ENCODE measurements at regions of chr9 and their contacts with region 1.

Region 1: DNA sequence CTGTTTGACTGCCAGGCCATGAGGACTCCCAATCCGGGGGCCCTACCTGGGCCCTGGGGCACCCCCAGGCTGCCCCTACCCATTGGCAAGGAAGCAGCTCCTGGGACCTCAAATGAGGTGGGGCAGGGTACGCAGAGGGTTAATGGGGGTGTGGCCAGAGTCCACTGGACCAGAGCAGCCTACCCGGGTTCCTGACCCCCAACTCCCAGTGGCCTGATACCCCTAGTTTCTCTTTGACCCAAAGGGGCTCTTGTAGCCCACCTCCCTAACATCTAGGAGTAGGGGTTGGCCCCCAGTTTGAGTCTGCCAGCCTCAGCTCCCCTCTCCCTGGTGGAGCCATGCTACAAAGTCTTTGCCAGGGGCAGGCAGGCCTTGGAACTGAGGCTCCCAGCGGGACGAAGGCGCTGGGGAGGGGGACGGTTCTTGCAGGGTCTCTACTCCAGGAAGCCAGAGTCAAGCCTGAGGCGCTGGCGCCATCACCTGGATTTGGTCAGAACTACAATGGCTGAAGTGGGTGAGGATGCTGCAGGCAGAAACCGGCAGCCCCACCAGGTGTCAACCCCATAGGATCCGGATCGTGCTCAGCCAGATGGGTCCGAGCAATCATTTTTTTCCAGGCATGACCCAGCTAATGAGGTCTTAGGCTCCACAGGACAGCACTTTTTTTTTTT is 8.4 kb upstream of the CERCAM start:
- DNase-seq: no peak
- H3K4me3 ChIP-seq: no peak overlapping the region
- H3K27ac ChIP-seq: no peak overlapping the region
- H3K4me1 ChIP-seq: peaks cover 0 to 6% (median 0%) of the 10 kb centered on the region in 6 donors
- H3K27me3 ChIP-seq: peaks cover 0 to 98% (median 16%) of the 10 kb centered on the region in 7 donors
- CTCF ChIP-seq: peak in 9 of 11 experiments; percentile 37 to 80 (median 60)
- POLR2A ChIP-seq: no peak

Region 2: DNA sequence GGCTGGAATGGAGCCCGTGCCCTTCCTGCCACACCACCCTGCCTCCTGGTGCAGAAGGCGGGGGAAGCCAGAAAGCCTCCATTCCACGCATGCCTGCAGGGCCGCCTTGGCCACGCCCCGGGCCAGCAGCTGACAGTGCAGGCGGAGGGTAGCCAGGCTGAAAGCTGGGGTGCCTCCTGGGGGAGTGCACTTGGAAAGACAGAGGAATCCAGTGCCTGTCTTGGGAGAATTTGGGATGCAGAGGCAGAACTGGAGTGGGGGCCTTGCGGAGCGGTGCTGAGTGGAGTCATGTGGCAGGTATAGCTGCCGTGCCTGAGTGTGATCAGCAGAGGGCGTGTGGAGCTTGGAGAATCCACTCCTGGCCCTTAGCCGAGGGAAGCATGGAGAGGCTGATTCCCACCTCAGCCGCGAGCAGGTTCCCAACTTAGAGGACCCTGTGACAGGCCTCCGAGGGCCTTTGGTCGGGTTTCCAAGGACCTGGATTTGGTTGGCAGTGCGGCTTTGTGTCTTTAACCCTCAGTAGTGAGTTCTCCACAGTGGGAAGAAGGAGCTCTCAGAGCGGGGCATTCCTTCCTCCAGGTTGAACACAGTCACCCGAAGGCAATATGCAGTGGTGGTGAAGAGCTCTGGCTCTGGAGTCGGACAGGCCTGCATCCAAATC is 50.1 kb before region 1 on chr9:
- intact Hi-C with region 1: loop called (anchors 2 kb)
- DNase-seq: peak; percentile 90
- H3K4me3 ChIP-seq: peak overlapping the region; percentile 21 to 67 (median 46)
- H3K27ac ChIP-seq: peak overlapping the region in 7 of 8 donors; percentile 16 to 70 (median 65)
- H3K4me1 ChIP-seq: peaks cover 7 to 33% (median 24%) of the 10 kb centered on the region in 6 donors
- H3K27me3 ChIP-seq: no peaks in the 10 kb centered on the region
- CTCF ChIP-seq: peak; percentile 83 to 97 (median 90)
- POLR2A ChIP-seq: no peak

Region 3: GRCh38 chr9:128479262-128479661 is 67.0 kb after region 1 on chr9:
- intact Hi-C with region 1: no loop called
- DNase-seq: peak; percentile 27
- H3K4me3 ChIP-seq: no peak overlapping the region
- H3K27ac ChIP-seq: no peak overlapping the region
- H3K4me1 ChIP-seq: no peaks in the 10 kb centered on the region
- H3K27me3 ChIP-seq: no peaks in the 10 kb centered on the region
- CTCF ChIP-seq: no peak
- POLR2A ChIP-seq: no peak